Pancreas (tissue), 10 donors: ENCODE measurements at regions of chr6 and their contacts with region 1.

Region 1: GRCh38 chr6:90285611-90286381 is 10.8 kb downstream of the BACH2 start:
- DNase-seq: peak; percentile 66 to 81 (median 74)
- ATAC-seq: peak; percentile 93 to 98 (median 98)
- H3K4me3 ChIP-seq: no peak overlapping the region
- H3K27ac ChIP-seq: peak overlapping the region in 3 of 4 donors; percentile 38 to 53 (median 50)
- H3K4me1 ChIP-seq: peaks cover 0 to 7% (median 5%) of the 10 kb centered on the region in 3 donors
- H3K27me3 ChIP-seq: no peaks in the 10 kb centered on the region
- CTCF ChIP-seq: no peak

Region 2: DNA sequence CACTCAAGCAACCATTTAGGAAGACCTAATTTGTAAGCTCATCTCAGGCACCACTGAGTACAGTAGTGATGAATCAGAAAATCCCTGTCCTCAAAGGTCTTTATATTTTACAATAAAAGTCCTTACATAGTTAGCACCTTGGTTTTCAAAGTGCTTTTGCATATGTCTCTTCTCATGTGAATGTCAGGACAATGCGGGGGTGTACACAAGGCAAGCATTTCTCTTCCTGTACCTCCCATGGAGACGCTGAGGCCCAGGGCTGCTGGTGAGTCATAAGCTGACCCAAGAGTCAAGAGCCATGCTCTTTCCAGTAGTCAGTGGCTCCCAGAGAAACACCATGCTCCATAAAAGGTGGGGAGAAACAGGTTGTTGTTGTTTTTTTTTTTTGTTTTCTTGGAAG is 217.5 kb before region 1 on chr6:
- intact Hi-C with region 1: no loop called
- DNase-seq: no peak
- ATAC-seq: peak in 1 of 4 donors; percentile 36
- H3K4me3 ChIP-seq: no peak overlapping the region
- H3K27ac ChIP-seq: no peak overlapping the region
- H3K4me1 ChIP-seq: no peaks in the 10 kb centered on the region
- H3K27me3 ChIP-seq: no peaks in the 10 kb centered on the region
- CTCF ChIP-seq: no peak

Region 3: GRCh38 chr6:90222724-90223198 is 63.0 kb before region 1 on chr6:
- intact Hi-C with region 1: loop called in 1 of 3 experiments (anchors 10 kb)
- DNase-seq: no peak
- ATAC-seq: no peak
- H3K4me3 ChIP-seq: no peak overlapping the region
- H3K27ac ChIP-seq: no peak overlapping the region
- H3K4me1 ChIP-seq: peaks cover 10 to 22% (median 17%) of the 10 kb centered on the region in 3 donors
- H3K27me3 ChIP-seq: no peaks in the 10 kb centered on the region
- CTCF ChIP-seq: no peak

Region 4: DNA sequence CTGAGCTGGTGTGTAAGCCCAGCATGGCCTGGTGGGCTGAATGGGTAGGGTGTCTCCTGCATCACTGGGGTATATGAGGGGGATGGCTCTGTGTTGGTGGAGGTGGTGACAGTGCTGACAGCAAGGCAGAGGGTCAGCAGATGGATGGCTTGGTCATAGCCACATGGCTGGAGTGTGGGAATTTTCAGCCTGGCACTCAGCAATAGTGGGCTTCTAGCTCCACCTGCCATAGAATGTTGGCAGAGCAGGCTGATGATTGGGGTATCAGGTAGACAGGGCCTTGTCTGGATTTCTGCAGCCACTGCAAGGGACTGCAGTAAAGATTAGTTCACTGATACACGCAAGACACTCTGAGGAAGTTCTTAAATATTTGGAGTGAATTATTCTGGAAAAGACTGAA is 148.3 kb after region 1 on chr6:
- intact Hi-C with region 1: no loop called
- DNase-seq: no peak
- ATAC-seq: peak in 1 of 4 donors; percentile 25
- H3K4me3 ChIP-seq: no peak overlapping the region
- H3K27ac ChIP-seq: no peak overlapping the region
- H3K4me1 ChIP-seq: no peaks in the 10 kb centered on the region
- H3K27me3 ChIP-seq: no peaks in the 10 kb centered on the region
- CTCF ChIP-seq: no peak